Aorta (tissue), 5 donors: ENCODE measurements at regions of chr10 and their contacts with region 1.

Region 1: GRCh38 chr10:23656735-23657134 is 217.9 kb downstream of the OTUD1 start:
- DNase-seq: no peak
- ATAC-seq: no peak
- H3K4me3 ChIP-seq: no peak overlapping the region
- H3K27ac ChIP-seq: no peak overlapping the region
- H3K4me1 ChIP-seq: no peaks in the 10 kb centered on the region
- H3K27me3 ChIP-seq: peaks cover 0 to 2% of the 10 kb centered on the region in 2 donors

Region 2: GRCh38 chr10:23314835-23315239 is 341.9 kb before region 1 on chr10:
- intact Hi-C with region 1: loop called in 1 of 2 experiments (anchors 5 kb)
- DNase-seq: no peak
- ATAC-seq: no peak
- H3K4me3 ChIP-seq: no peak overlapping the region
- H3K27ac ChIP-seq: no peak overlapping the region
- H3K4me1 ChIP-seq: no peaks in the 10 kb centered on the region
- H3K27me3 ChIP-seq: no peaks in the 10 kb centered on the region

Region 3: DNA sequence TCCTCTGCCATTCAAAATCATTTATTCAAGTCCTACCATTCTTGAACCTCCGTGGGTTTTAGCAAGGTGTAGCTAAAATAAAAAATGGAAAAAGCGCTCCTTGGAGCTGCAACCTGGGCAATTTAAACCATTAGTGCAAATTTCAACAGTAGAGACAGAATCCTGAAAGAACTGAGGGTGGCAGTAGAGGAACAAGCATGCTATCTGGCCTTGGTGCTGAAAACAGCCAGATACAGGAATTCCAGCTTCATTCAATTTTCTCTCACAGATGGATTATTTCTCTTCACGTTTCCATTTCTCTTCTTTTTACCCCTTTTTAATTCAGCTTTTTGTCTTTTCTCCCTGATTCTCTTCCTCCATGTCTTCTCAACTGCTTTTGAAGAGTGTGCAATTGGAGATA is 140.2 kb before region 1 on chr10:
- intact Hi-C with region 1: loop called in 1 of 2 experiments (anchors 1 kb)
- DNase-seq: no peak
- ATAC-seq: no peak
- H3K4me3 ChIP-seq: no peak overlapping the region
- H3K27ac ChIP-seq: no peak overlapping the region
- H3K4me1 ChIP-seq: no peaks in the 10 kb centered on the region
- H3K27me3 ChIP-seq: no peaks in the 10 kb centered on the region